ENCODE measurements at regions of chr6 and their contacts with region 1.

Region 1: GRCh38 chr6:154410619-154411072 is 54.0 kb upstream of the IPCEF1 start:
- DNase-seq: peak; percentile 77 to 80
- ATAC-seq: peak; percentile 91
- H3K4me3 ChIP-seq: no peak overlapping the region
- H3K27ac ChIP-seq: peak overlapping the region; percentile 0 to 93
- H3K4me1 ChIP-seq: peaks cover 2 to 4% of the 10 kb centered on the region in 2 donors
- H3K27me3 ChIP-seq: no peaks in the 10 kb centered on the region

Region 2: GRCh38 chr6:154156135-154156896 is 254.3 kb before region 1 on chr6:
- intact Hi-C with region 1: loop called (anchors 10 kb)
- DNase-seq: peak in 1 of 2 donors; percentile 61
- ATAC-seq: no peak
- H3K4me3 ChIP-seq: no peak overlapping the region
- H3K27ac ChIP-seq: no peak overlapping the region
- H3K4me1 ChIP-seq: no peaks in the 10 kb centered on the region
- H3K27me3 ChIP-seq: no peaks in the 10 kb centered on the region

Region 3: GRCh38 chr6:154448448-154449096 is 37.9 kb after region 1 on chr6:
- intact Hi-C with region 1: loop called in 1 of 2 experiments (anchors 5 kb)
- DNase-seq: peak in 1 of 2 donors; percentile 55
- ATAC-seq: peak; percentile 65
- H3K4me3 ChIP-seq: no peak overlapping the region
- H3K27ac ChIP-seq: peak overlapping the region in 1 of 2 donors; percentile 59
- H3K4me1 ChIP-seq: peaks cover 0 to 12% of the 10 kb centered on the region in 2 donors
- H3K27me3 ChIP-seq: no peaks in the 10 kb centered on the region

Region 4: GRCh38 chr6:154488802-154489437 is 78.3 kb after region 1 on chr6:
- intact Hi-C with region 1: loop called (anchors 5 kb)
- DNase-seq: no peak
- ATAC-seq: no peak
- H3K4me3 ChIP-seq: no peak overlapping the region
- H3K27ac ChIP-seq: peak overlapping the region; percentile 57 to 85
- H3K4me1 ChIP-seq: peaks cover 7 to 19% of the 10 kb centered on the region in 2 donors
- H3K27me3 ChIP-seq: no peaks in the 10 kb centered on the region

Region 5: GRCh38 chr6:154510143-154510905 is 99.7 kb after region 1 on chr6 and contains the start of gene CNKSR3:
- intact Hi-C with region 1: loop called (anchors 2 to 5 kb)
- DNase-seq: peak; percentile 90 to 94
- ATAC-seq: peak; percentile 91
- H3K4me3 ChIP-seq: peak within 1 kb of the TSS; percentile 81 to 83
- H3K27ac ChIP-seq: peak within 1 kb of the TSS; percentile 24 to 92
- H3K4me1 ChIP-seq: peaks cover 0 to 3% of the 10 kb centered on the region in 2 donors
- H3K27me3 ChIP-seq: no peaks in the 10 kb centered on the region
- total RNA-seq, gene CNKSR3: 19.3 to 41.2 TPM

Region 6: GRCh38 chr6:154522576-154522975 is 111.9 kb after region 1 on chr6:
- intact Hi-C with region 1: no loop called
- DNase-seq: no peak
- ATAC-seq: no peak
- H3K4me3 ChIP-seq: no peak overlapping the region
- H3K27ac ChIP-seq: no peak overlapping the region
- H3K4me1 ChIP-seq: no peaks in the 10 kb centered on the region
- H3K27me3 ChIP-seq: no peaks in the 10 kb centered on the region

Measured in aorta (tissue), 5 donors.